Activated CD4-positive, alpha-beta memory T cell treated with anti-CD3 and anti-CD28 coated beads for 36 hours (primary cell): ENCODE measurements at regions of chrX and their contacts with region 1.

Region 1: GRCh38 chrX:55057675-55058249 is 17.1 kb upstream of the PAGE2B start:
- DNase-seq: peak; percentile 23
- H3K4me3 Mint-ChIP-seq: peak overlapping the region; percentile 35
- H3K27ac Mint-ChIP-seq: no peak overlapping the region
- H3K4me1 Mint-ChIP-seq: peaks cover 18% of the 10 kb centered on the region
- H3K27me3 Mint-ChIP-seq: no peaks in the 10 kb centered on the region

Region 2: GRCh38 chrX:54891573-54891972 is 166.2 kb before region 1 on chrX:
- CTCF ChIA-PET with region 1: interaction called, 13 read pairs
- POLR2A ChIA-PET with region 1: no interaction called
- intact Hi-C with region 1: loop called (anchors 1 kb)
- DNase-seq: peak; percentile 26
- H3K4me3 Mint-ChIP-seq: no peak overlapping the region
- H3K27ac Mint-ChIP-seq: no peak overlapping the region
- H3K4me1 Mint-ChIP-seq: no peaks in the 10 kb centered on the region
- H3K27me3 Mint-ChIP-seq: peaks cover 9% of the 10 kb centered on the region